RWPE1 (cell line): ENCODE measurements at regions of chr5 and their contacts with region 1.

Region 1: GRCh38 chr5:115575167-115576070 is 26.9 kb downstream of the TICAM2 start:
- DNase-seq: peak; percentile 61
- H3K27ac ChIP-seq: no peak overlapping the region
- CTCF ChIP-seq: no peak

Region 2: GRCh38 chr5:115309751-115310370 is 265.6 kb before region 1 on chr5:
- CTCF ChIA-PET with region 1: interaction called, 17 read pairs
- POLR2A ChIA-PET with region 1: no interaction called
- DNase-seq: peak; percentile 65
- H3K27ac ChIP-seq: no peak overlapping the region
- CTCF ChIP-seq: peak; percentile 81

Region 3: GRCh38 chr5:115375922-115376321 is 199.5 kb before region 1 on chr5:
- CTCF ChIA-PET with region 1: interaction called, 17 read pairs
- POLR2A ChIA-PET with region 1: no interaction called
- DNase-seq: no peak
- H3K27ac ChIP-seq: no peak overlapping the region
- CTCF ChIP-seq: no peak

Region 4: DNA sequence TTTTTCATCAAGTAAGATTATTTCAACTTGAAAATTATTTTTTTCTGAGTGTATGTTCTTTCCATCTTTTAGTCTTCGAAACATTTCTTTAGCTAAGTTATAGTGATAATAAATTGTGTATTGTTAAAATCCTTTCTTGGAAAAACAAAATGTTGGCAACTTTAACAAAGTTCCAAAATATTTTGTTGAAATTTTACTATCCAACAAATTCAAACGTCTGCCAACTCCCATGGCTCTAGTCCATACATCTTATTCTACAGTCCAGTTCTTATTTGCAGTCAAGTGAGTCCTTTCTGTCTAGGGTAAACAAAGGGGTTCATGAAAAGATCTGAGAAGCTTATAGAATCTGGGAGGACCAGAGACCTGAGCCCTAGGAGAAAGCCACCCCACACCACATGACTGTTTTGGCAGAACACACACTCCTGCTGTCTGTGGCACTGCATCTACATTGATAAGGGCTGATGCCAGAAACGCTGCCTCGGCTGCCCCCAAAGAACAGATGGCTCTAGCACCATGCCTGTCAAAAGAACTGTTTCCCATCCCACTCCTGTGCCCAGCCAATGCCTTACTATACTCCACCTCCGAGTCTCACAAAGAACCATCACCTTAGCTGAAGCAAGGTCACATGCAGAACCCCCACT is 78.4 kb before region 1 on chr5:
- CTCF ChIA-PET with region 1: no interaction called
- POLR2A ChIA-PET with region 1: no interaction called
- DNase-seq: no peak
- H3K27ac ChIP-seq: no peak overlapping the region
- CTCF ChIP-seq: no peak

Region 5: DNA sequence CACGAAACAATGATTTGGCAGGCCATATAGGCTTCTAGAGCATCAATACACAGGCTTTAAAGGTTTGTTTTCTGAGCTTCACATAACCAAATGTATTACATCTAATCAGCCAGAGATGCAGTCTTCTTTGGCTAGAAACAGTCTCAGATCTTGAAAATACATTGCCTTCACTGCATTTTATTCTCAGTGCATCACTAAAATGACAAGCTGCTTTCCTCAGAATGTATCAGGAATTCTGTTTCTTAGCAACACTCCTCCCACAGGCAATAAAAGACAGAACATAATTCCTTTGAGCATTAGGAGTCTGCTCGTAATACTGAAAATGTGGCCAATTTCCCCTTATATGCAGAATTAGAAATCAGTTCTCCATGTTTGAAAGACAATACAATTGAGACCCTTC is 67.7 kb before region 1 on chr5:
- CTCF ChIA-PET with region 1: no interaction called
- POLR2A ChIA-PET with region 1: no interaction called
- DNase-seq: no peak
- H3K27ac ChIP-seq: no peak overlapping the region
- CTCF ChIP-seq: no peak

Region 6: DNA sequence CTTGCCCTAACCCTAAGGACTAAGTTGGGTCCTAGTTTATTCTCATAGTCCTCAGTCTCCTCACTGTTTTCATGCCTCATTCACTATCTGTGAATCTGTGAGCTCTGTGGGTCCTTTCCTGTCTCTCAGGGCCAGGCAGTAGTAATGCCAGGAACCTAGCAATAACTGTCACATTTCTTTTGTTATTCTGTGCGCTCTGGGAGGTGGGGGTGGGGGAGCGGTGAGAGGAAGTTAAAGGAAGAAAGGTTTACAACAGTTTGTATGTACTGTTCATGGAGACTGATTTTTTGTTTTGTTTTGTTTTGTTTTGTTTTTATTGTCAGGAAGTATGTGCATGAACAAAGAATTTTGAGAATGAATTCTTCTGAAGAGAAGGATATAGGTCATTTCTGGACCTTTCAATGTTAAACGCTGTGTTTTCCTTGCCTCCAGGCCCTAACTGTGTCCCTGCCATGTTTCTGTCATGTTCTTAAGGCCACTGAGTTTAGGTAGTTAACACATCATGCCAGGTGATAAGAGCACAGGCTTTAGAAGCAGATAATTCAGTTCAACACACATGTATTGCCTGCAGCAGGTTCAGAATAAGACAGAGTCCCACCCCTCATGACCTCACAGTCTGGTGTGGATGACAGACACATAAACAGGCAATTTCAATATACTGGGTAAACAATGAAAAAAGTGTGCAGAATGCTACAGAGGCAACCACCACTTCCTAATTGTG is 17.6 kb before region 1 on chr5:
- CTCF ChIA-PET with region 1: no interaction called
- POLR2A ChIA-PET with region 1: no interaction called
- DNase-seq: no peak
- H3K27ac ChIP-seq: no peak overlapping the region
- CTCF ChIP-seq: no peak